ENCODE measurements at regions of chr18 and their contacts with region 1.

Region 1: GRCh38 chr18:32092422-32093101 is 888 bp downstream of the RNF138 start:
- DNase-seq: peak; percentile 98 to 100 (median 99)
- ATAC-seq: peak; percentile 95
- H3K4me3 ChIP-seq: peak overlapping the region; percentile 72
- H3K4me3 Mint-ChIP-seq: peak overlapping the region; percentile 90 to 100 (median 98)
- H3K27ac ChIP-seq: peak overlapping the region; percentile 100
- H3K27ac Mint-ChIP-seq: peak overlapping the region; percentile 91 to 98 (median 97)
- H3K4me1 ChIP-seq: peaks cover 32 to 35% of the 10 kb centered on the region in 2 donors
- H3K4me1 Mint-ChIP-seq: peaks cover 35 to 57% (median 46%) of the 10 kb centered on the region in 7 donors
- H3K27me3 ChIP-seq: no peaks in the 10 kb centered on the region
- H3K27me3 Mint-ChIP-seq: no peaks in the 10 kb centered on the region

Region 2: GRCh38 chr18:31162419-31162793 is 930.2 kb before region 1 on chr18:
- CTCF ChIA-PET with region 1: no interaction called
- POLR2A ChIA-PET with region 1: no interaction called
- intact Hi-C with region 1: loop called in 1 of 2 experiments (anchors 5 kb)
- DNase-seq: no peak
- ATAC-seq: peak; percentile 21
- H3K4me3 ChIP-seq: peak overlapping the region; percentile 28
- H3K4me3 Mint-ChIP-seq: peak overlapping the region in 9 of 10 donors; percentile 50 to 88 (median 82)
- H3K27ac ChIP-seq: peak overlapping the region; percentile 70
- H3K27ac Mint-ChIP-seq: peak overlapping the region in 8 of 9 donors; percentile 43 to 94 (median 89)
- H3K4me1 ChIP-seq: no peaks in the 10 kb centered on the region
- H3K4me1 Mint-ChIP-seq: peaks cover 0 to 24% (median 9%) of the 10 kb centered on the region in 7 donors
- H3K27me3 ChIP-seq: no peaks in the 10 kb centered on the region
- H3K27me3 Mint-ChIP-seq: no peaks in the 10 kb centered on the region

Region 3: GRCh38 chr18:31267823-31268481 is 824.6 kb before region 1 on chr18:
- CTCF ChIA-PET with region 1: no interaction called
- POLR2A ChIA-PET with region 1: no interaction called
- intact Hi-C with region 1: no loop called
- DNase-seq: no peak
- ATAC-seq: no peak
- H3K4me3 ChIP-seq: no peak overlapping the region
- H3K4me3 Mint-ChIP-seq: no peak overlapping the region
- H3K27ac ChIP-seq: no peak overlapping the region
- H3K27ac Mint-ChIP-seq: no peak overlapping the region
- H3K4me1 ChIP-seq: no peaks in the 10 kb centered on the region
- H3K4me1 Mint-ChIP-seq: peaks cover 0 to 4% (median 0%) of the 10 kb centered on the region in 7 donors
- H3K27me3 ChIP-seq: no peaks in the 10 kb centered on the region
- H3K27me3 Mint-ChIP-seq: no peaks in the 10 kb centered on the region

Region 4: DNA sequence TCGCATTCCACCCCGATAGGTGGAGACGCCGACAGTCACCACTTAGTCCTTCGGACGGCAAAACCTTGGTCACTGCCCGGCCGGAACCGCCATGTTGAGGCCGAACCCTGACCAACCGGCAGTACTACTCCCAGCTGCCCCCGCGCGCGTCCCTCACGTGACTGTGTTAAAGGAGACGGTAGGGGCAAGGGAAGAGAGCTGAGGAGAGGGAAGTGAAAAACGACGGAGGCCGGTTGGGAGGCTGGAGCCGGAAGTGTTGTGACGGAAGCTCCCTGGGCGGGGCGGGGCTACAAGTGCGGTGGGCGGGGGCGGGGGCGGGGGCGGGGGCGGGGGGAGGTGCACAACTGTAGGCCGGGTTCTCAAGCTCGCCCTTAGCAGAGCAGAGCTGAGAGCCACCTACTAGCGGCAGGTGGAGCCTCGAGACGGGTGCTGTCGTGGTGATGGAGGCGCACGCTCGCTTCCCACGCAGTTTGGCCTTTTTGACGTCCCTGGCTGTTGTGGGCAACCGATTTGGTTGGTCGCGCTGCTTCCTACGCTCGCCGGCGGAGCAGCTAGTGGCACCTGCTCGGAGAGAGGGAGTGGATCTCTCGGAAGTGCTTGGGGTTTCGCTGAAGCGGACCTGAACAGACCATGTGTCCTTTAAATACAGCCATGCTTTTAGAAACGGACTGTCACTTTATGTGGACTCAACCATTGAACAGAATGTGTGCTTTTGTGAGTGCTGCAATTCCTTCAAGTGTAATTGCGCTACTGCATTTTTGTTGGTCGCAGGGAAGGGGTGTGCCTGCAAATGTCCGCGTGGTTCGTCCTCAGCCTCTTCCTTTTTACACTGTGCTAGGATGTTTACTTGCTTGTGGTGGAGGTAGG is 149.3 kb before region 1 on chr18 and contains the start of gene TRAPPC8:
- CTCF ChIA-PET with region 1: no interaction called
- POLR2A ChIA-PET with region 1: interaction called, 30 read pairs
- intact Hi-C with region 1: loop called (anchors 1 kb)
- DNase-seq: peak; percentile 81 to 94 (median 91)
- ATAC-seq: peak; percentile 91
- H3K4me3 ChIP-seq: peak within 1 kb of the TSS; percentile 98
- H3K4me3 Mint-ChIP-seq: peak within 1 kb of the TSS; percentile 95 to 100 (median 98)
- H3K27ac ChIP-seq: peak within 1 kb of the TSS; percentile 97
- H3K27ac Mint-ChIP-seq: peak within 1 kb of the TSS; percentile 95 to 100 (median 99)
- H3K4me1 ChIP-seq: peaks cover 17 to 26% of the 10 kb centered on the region in 2 donors
- H3K4me1 Mint-ChIP-seq: peaks cover 28 to 54% (median 44%) of the 10 kb centered on the region in 7 donors
- H3K27me3 ChIP-seq: no peaks in the 10 kb centered on the region
- H3K27me3 Mint-ChIP-seq: no peaks in the 10 kb centered on the region
- total RNA-seq, gene TRAPPC8: 31.0 to 62.7 (median 44.3) TPM

Region 5: DNA sequence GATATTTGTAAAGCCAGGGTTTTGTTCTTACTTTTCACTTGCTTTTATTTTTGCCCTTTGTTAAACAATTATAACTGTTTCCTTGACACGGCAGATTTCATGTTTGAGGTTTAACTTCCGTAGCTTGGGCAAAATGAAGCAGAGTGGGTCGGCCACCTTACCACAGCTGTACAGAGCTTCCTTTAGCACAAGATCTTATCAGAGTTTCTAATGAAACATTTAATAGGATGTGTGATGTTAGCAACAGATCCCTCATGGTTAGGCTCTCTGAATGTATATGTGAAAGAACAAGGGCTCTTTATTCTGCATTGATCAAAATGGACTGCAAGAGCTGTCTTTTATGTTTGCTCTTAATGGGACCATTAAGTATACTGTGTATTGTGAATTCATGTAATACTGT is 51.6 kb before region 1 on chr18:
- CTCF ChIA-PET with region 1: no interaction called
- POLR2A ChIA-PET with region 1: interaction called, 3 read pairs
- intact Hi-C with region 1: loop called (anchors 1 to 2 kb)
- DNase-seq: peak in 8 of 9 donors; percentile 19 to 66 (median 44)
- ATAC-seq: peak; percentile 87
- H3K4me3 ChIP-seq: peak overlapping the region; percentile 12
- H3K4me3 Mint-ChIP-seq: peak overlapping the region; percentile 14 to 80 (median 73)
- H3K27ac ChIP-seq: peak overlapping the region; percentile 1
- H3K27ac Mint-ChIP-seq: peak overlapping the region; percentile 0 to 85 (median 65)
- H3K4me1 ChIP-seq: peaks cover 25 to 61% of the 10 kb centered on the region in 2 donors
- H3K4me1 Mint-ChIP-seq: peaks cover 35 to 69% (median 61%) of the 10 kb centered on the region in 7 donors
- H3K27me3 ChIP-seq: no peaks in the 10 kb centered on the region
- H3K27me3 Mint-ChIP-seq: no peaks in the 10 kb centered on the region

Region 6: GRCh38 chr18:32072321-32072720 is 20.2 kb before region 1 on chr18:
- CTCF ChIA-PET with region 1: interaction called, 3 read pairs
- POLR2A ChIA-PET with region 1: interaction called, 6 read pairs
- intact Hi-C with region 1: loop called in 1 of 2 experiments (anchors 1 kb)
- DNase-seq: peak in 4 of 9 donors; percentile 34 to 55 (median 45)
- ATAC-seq: peak; percentile 67
- H3K4me3 ChIP-seq: no peak overlapping the region
- H3K4me3 Mint-ChIP-seq: no peak overlapping the region
- H3K27ac ChIP-seq: no peak overlapping the region
- H3K27ac Mint-ChIP-seq: peak overlapping the region in 4 of 9 donors; percentile 15 to 68 (median 30)
- H3K4me1 ChIP-seq: no peaks in the 10 kb centered on the region
- H3K4me1 Mint-ChIP-seq: peaks cover 0 to 30% (median 18%) of the 10 kb centered on the region in 7 donors
- H3K27me3 ChIP-seq: no peaks in the 10 kb centered on the region
- H3K27me3 Mint-ChIP-seq: no peaks in the 10 kb centered on the region

Region 7: GRCh38 chr18:32126538-32126937 is 34.0 kb after region 1 on chr18:
- CTCF ChIA-PET with region 1: no interaction called
- POLR2A ChIA-PET with region 1: interaction called, 3 read pairs
- intact Hi-C with region 1: loop called in 1 of 2 experiments (anchors 2 kb)
- DNase-seq: no peak
- ATAC-seq: no peak
- H3K4me3 ChIP-seq: no peak overlapping the region
- H3K4me3 Mint-ChIP-seq: no peak overlapping the region
- H3K27ac ChIP-seq: no peak overlapping the region
- H3K27ac Mint-ChIP-seq: peak overlapping the region in 3 of 9 donors; percentile 4 to 53 (median 32)
- H3K4me1 ChIP-seq: no peaks in the 10 kb centered on the region
- H3K4me1 Mint-ChIP-seq: peaks cover 0 to 20% (median 7%) of the 10 kb centered on the region in 7 donors
- H3K27me3 ChIP-seq: no peaks in the 10 kb centered on the region
- H3K27me3 Mint-ChIP-seq: no peaks in the 10 kb centered on the region